ENCODE measurements at regions of chr9 and their contacts with region 1.

Region 1: GRCh38 chr9:136539427-136540421 is 6.1 kb downstream of the NOTCH1 start:
- DNase-seq: peak; percentile 94 to 96 (median 94)
- ATAC-seq: peak; percentile 77 to 89 (median 82)
- H3K4me3 ChIP-seq: peak overlapping the region in 9 of 12 donors; percentile 27 to 51 (median 41)
- H3K27ac ChIP-seq: peak overlapping the region; percentile 66 to 97 (median 86)
- H3K4me1 ChIP-seq: peaks cover 26 to 94% (median 77%) of the 10 kb centered on the region in 12 donors
- H3K27me3 ChIP-seq: no peaks in the 10 kb centered on the region
- CTCF ChIP-seq: no peak
- POLR2A ChIP-seq: peak in 1 of 2 donors; percentile 55

Region 2: GRCh38 chr9:136493567-136493971 is 46.2 kb before region 1 on chr9:
- intact Hi-C with region 1: loop called in 9 of 10 experiments (anchors 5 to 10 kb)
- DNase-seq: peak in 1 of 5 donors; percentile 52
- ATAC-seq: peak in 2 of 4 donors; percentile 4 to 10
- H3K4me3 ChIP-seq: no peak overlapping the region
- H3K27ac ChIP-seq: peak overlapping the region in 2 of 12 donors; percentile 18 to 33
- H3K4me1 ChIP-seq: peaks cover 0 to 29% (median 3%) of the 10 kb centered on the region in 12 donors
- H3K27me3 ChIP-seq: no peaks in the 10 kb centered on the region
- CTCF ChIP-seq: no peak
- POLR2A ChIP-seq: no peak

Region 3: GRCh38 chr9:136587145-136587943 is 47.6 kb after region 1 on chr9:
- intact Hi-C with region 1: loop called in 1 of 10 experiments (anchors 5 kb)
- DNase-seq: peak; percentile 90 to 94 (median 90)
- ATAC-seq: peak; percentile 34 to 75 (median 62)
- H3K4me3 ChIP-seq: peak overlapping the region in 7 of 12 donors; percentile 0 to 29 (median 22)
- H3K27ac ChIP-seq: peak overlapping the region; percentile 7 to 85 (median 69)
- H3K4me1 ChIP-seq: peaks cover 5 to 80% (median 61%) of the 10 kb centered on the region in 12 donors
- H3K27me3 ChIP-seq: no peaks in the 10 kb centered on the region
- CTCF ChIP-seq: no peak
- POLR2A ChIP-seq: no peak

Region 4: GRCh38 chr9:136631038-136632000 is 91.6 kb after region 1 on chr9:
- intact Hi-C with region 1: loop called in 4 of 10 experiments (anchors 5 to 10 kb)
- DNase-seq: peak; percentile 79 to 92 (median 80)
- ATAC-seq: peak; percentile 80 to 96 (median 92)
- H3K4me3 ChIP-seq: no peak overlapping the region
- H3K27ac ChIP-seq: no peak overlapping the region
- H3K4me1 ChIP-seq: peaks cover 0 to 28% (median 12%) of the 10 kb centered on the region in 12 donors
- H3K27me3 ChIP-seq: peaks cover 0 to 3% (median 0%) of the 10 kb centered on the region in 9 donors
- CTCF ChIP-seq: peak; percentile 71 to 89 (median 82)
- POLR2A ChIP-seq: no peak

Region 5: GRCh38 chr9:136694236-136694942 is 154.7 kb after region 1 on chr9:
- intact Hi-C with region 1: no loop called
- DNase-seq: peak in 2 of 5 donors; percentile 64 to 77
- ATAC-seq: peak in 3 of 4 donors; percentile 43 to 57 (median 50)
- H3K4me3 ChIP-seq: no peak overlapping the region
- H3K27ac ChIP-seq: no peak overlapping the region
- H3K4me1 ChIP-seq: peaks cover 3 to 51% (median 30%) of the 10 kb centered on the region in 12 donors
- H3K27me3 ChIP-seq: no peaks in the 10 kb centered on the region
- CTCF ChIP-seq: peak; percentile 60 to 81 (median 73)
- POLR2A ChIP-seq: no peak